ENCODE measurements at regions of chr1 and their contacts with region 1.

Region 1: GRCh38 chr1:89605692-89606091 is 27.2 kb upstream of the LRRC8C start:
- DNase-seq: no peak
- ATAC-seq: no peak
- H3K4me3 ChIP-seq: no peak overlapping the region
- H3K27ac ChIP-seq: no peak overlapping the region
- H3K4me1 ChIP-seq: peaks cover 19% of the 10 kb centered on the region
- H3K27me3 ChIP-seq: no peaks in the 10 kb centered on the region

Region 2: DNA sequence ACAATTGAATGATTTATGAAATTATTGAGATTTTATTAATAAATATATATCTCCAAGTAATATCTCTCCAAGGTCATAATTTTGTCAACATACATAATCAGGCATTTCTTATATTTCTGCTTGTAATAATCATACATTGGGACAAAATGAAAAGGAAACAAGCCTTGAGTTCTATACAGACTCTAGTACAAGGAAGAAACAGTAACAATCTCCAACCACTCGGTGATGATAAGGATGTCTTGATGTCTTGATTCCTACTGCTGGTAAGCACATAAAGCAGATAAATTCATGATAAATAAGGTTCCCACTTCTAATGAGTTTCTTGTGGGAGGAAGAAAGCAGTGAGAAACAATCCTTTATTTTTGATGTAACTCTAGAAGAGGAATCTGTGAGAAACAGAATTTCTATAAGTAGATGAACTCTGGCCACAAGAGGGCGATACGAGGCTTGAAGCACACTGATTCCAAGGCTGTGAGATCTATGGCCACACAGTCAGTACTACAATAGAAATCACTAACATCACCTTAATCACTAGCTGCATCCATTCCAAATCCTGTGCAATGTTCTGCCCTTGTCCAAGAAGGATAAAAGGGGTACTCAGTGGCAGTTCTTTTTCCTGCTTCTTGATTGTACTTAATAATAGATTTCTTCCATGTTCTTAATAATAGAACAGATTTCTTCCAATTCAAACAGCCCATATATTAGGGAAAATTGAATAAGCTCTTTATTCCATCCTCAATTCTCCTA is 122.5 kb before region 1 on chr1:
- intact Hi-C with region 1: loop called in 1 of 4 experiments (anchors 10 kb)
- DNase-seq: peak; percentile 66 to 84 (median 71)
- ATAC-seq: peak; percentile 78 to 81
- H3K4me3 ChIP-seq: no peak overlapping the region
- H3K27ac ChIP-seq: no peak overlapping the region
- H3K4me1 ChIP-seq: no peaks in the 10 kb centered on the region
- H3K27me3 ChIP-seq: no peaks in the 10 kb centered on the region

Region 3: DNA sequence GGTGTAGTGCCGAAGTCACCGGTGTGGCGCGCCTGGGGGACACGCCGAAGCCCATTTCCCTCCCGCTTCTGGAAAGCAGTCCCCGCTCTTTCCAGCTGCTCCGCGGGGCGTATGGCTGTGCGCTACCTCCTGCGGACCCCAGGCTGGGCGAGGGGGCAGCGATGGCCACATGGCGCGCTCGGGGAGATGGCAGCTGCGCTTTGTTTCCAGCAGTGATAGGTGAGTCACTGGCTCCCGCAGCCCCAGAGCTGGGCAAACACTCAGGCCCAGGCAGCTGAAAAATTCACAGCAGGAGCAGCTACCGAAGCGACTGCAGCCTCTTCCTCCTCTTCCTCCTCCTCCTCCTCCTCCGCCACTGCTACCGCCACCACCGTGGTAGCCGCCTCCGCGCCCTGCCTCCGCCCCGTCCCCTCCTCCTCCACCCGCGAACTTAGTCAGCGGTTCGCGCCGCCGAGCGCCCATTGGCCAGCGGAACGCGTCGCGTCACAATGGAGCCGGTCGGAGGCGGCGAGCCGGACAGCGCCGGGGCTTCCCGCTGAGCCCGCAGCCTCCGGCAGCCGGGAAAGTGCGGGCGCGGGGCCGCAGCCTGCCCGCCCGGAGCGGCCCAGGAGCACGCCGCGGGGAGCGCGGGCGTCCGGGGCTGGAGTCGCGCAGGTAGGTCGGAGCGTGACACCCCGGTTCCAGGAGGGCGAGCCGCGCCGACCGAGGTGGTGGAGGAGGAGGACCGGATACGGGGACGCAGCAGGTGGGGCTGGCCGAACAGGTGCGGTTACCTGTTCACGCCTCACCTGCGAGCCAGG is 81.1 kb before region 1 on chr1 and contains the start of gene LRRC8B:
- intact Hi-C with region 1: loop called in 1 of 4 experiments (anchors 5 kb)
- DNase-seq: peak; percentile 93 to 97 (median 97)
- ATAC-seq: peak; percentile 99 to 100
- H3K4me3 ChIP-seq: peak within 1 kb of the TSS; percentile 86
- H3K27ac ChIP-seq: peak within 1 kb of the TSS; percentile 63
- H3K4me1 ChIP-seq: peaks cover 3% of the 10 kb centered on the region
- H3K27me3 ChIP-seq: no peaks in the 10 kb centered on the region
- total RNA-seq, gene LRRC8B: 3.4 to 5.6 (median 5.2) TPM

Region 4: DNA sequence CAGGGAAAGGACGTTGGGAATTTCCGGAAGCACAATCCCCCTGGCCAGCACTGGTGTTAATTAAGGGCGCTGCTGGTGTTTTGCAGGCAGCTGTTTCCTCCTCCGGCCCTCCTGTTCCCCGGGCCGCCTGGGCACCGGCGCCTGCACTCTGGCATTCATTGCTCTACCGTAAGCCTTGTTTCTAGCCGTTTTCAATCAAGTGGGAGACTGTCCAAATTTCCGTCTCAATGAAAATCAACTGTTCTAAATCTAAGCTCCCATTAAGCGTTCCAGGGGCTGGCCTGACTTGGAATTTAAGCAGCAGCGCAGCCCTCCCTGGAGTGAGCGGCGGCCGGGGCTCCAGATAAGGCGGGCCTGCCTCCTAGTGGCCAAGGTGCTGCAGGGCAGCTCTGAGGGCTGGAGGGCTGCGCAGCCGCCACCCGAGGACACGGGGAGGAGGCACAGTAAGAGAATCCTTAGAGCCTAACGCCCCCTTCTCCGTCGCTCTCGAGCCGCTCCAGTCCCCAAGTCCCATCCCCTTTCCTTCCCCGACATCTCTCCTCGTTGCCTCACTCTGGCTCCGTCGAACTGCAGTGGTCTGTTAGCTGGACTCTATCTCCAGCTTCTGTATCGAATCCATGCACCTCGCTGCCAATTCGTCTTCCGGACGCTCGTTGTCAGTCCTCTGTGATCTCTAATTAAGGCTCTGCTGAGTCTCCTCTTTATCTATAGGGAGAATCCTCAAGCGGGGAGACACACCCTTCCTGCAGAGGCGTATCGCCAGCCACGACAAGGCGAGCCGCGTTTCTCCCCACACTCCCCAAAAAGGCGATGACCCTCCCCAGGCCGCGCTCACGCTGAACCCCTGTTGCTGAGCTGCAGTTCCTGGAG is 157.3 kb after region 1 on chr1:
- intact Hi-C with region 1: loop called in 1 of 4 experiments (anchors 10 kb)
- DNase-seq: peak; percentile 88 to 95 (median 95)
- ATAC-seq: peak; percentile 99
- H3K4me3 ChIP-seq: peak overlapping the region; percentile 69
- H3K27ac ChIP-seq: peak overlapping the region; percentile 32
- H3K4me1 ChIP-seq: peaks cover 4% of the 10 kb centered on the region
- H3K27me3 ChIP-seq: no peaks in the 10 kb centered on the region